ENCODE measurements at regions of chr7 and their contacts with region 1.

Region 1: DNA sequence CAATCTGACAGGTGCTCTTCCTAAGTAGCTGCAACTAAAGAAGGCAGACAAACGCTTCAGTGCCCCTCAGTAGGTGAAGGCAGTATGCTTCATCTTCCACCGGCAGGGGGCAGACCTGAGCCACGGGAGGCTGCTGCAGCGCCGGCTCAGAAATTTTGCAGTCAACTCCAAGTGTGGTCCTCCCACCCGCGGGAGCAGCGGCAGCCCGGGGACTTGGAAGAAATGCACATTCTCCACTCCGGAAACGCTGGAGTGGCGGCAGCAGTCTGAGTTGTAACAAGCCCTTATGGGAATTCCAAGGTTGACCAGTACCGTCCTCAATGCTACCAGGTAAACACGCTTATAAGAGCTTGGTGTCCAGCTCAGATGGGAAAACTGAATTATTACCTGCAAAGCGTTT is 3.4 kb downstream of the IGFBP3 start:
- DNase-seq: peak; percentile 73 to 97 (median 88)

Region 2: GRCh38 chr7:47088329-47089067 is 1170.8 kb after region 1 on chr7:
- intact Hi-C with region 1: loop called (anchors 1 kb)
- DNase-seq: peak in 9 of 10 donors; percentile 27 to 92 (median 52)

Region 3: DNA sequence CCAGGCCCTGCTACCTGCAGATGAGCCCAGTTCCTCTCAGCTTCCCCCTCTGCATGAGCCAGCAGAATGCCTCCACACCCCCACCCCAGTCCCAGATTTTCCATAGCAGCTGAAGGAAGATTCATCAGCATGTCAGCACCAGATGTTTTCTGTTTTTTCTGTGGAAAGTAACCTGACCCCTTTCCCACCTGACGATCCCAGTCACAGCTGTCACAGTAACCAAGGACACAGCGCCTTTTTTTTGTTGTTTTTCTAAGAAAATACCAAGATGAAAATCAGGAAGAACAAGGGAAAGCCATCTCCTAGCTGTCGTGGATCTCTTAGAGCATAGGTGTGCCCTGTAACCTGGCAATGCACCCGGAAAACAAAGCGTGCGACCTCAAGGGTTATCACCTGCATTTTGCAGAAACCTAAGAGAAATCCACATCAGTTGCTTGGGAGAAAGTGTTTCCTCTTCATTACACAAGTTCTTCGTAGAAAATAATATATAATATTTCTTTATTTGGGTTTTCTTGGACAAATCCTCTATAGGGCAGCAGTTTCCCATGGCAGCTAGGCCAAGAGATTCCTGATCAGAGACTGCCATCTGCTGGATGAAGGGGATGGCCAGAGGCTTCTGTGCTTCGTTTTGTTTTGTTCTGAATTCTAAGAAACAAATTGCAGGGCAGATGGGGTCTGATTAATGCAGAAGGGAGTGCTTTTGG is 1262.3 kb after region 1 on chr7:
- intact Hi-C with region 1: loop called (anchors 1 kb)
- DNase-seq: peak in 5 of 10 donors; percentile 19 to 52 (median 45)

Measured in posterior cingulate gyrus (tissue), 11 donors.